HCT116 (cell line): ENCODE measurements at regions of chr10 and their contacts with region 1.

Region 1: GRCh38 chr10:14478604-14479003 is 147.9 kb upstream of the FRMD4A start:
- DNase-seq: peak; percentile 19
- ATAC-seq: peak; percentile 78
- H3K4me3 ChIP-seq: no peak overlapping the region
- H3K27ac ChIP-seq: no peak overlapping the region
- H3K4me1 ChIP-seq: no peaks in the 10 kb centered on the region
- H3K27me3 ChIP-seq: peaks cover 30% of the 10 kb centered on the region
- CTCF ChIP-seq: peak; percentile 48 to 64 (median 56); a peak in 5 of 6 replicates
- POLR2A ChIP-seq: no peak
- RAD21 ChIP-seq: peak; percentile 80

Region 2: DNA sequence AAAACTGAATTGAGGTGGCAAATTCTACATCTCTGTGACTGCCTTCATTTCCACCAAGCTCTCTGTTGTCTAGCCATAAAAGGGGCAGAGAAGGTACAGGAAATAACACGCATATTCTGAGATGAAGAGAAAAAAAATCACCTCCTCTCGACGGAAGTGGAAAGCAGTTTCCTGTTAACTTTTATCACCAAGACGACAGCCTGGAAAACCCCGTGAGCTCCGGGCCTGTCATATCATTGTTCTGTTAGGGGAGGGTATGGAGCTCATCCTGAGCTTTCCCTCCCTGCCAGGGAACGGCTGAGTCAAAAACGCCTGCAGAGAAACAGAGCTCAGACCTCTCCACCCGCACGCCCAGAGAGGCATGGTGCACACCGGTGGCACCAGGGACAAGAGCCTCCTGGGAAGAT is 691.6 kb before region 1 on chr10:
- CTCF ChIA-PET with region 1: interaction called, 3 read pairs
- POLR2A ChIA-PET with region 1: no interaction called
- RAD21 ChIA-PET with region 1: interaction called in 1 of 2 experiments, 3 read pairs
- intact Hi-C with region 1: loop called (anchors 1 kb)
- DNase-seq: no peak
- ATAC-seq: no peak
- H3K4me3 ChIP-seq: no peak overlapping the region
- H3K27ac ChIP-seq: no peak overlapping the region
- H3K4me1 ChIP-seq: no peaks in the 10 kb centered on the region
- H3K27me3 ChIP-seq: no peaks in the 10 kb centered on the region
- CTCF ChIP-seq: no peak
- POLR2A ChIP-seq: no peak
- RAD21 ChIP-seq: no peak

Region 3: GRCh38 chr10:14195433-14195832 is 283.2 kb before region 1 on chr10:
- CTCF ChIA-PET with region 1: interaction called, 48 read pairs
- POLR2A ChIA-PET with region 1: no interaction called
- RAD21 ChIA-PET with region 1: no interaction called
- intact Hi-C with region 1: loop called (anchors 1 kb)
- DNase-seq: no peak
- ATAC-seq: no peak
- H3K4me3 ChIP-seq: no peak overlapping the region
- H3K27ac ChIP-seq: no peak overlapping the region
- H3K4me1 ChIP-seq: no peaks in the 10 kb centered on the region
- H3K27me3 ChIP-seq: peaks cover 67% of the 10 kb centered on the region
- CTCF ChIP-seq: no peak
- POLR2A ChIP-seq: no peak
- RAD21 ChIP-seq: no peak

Region 4: DNA sequence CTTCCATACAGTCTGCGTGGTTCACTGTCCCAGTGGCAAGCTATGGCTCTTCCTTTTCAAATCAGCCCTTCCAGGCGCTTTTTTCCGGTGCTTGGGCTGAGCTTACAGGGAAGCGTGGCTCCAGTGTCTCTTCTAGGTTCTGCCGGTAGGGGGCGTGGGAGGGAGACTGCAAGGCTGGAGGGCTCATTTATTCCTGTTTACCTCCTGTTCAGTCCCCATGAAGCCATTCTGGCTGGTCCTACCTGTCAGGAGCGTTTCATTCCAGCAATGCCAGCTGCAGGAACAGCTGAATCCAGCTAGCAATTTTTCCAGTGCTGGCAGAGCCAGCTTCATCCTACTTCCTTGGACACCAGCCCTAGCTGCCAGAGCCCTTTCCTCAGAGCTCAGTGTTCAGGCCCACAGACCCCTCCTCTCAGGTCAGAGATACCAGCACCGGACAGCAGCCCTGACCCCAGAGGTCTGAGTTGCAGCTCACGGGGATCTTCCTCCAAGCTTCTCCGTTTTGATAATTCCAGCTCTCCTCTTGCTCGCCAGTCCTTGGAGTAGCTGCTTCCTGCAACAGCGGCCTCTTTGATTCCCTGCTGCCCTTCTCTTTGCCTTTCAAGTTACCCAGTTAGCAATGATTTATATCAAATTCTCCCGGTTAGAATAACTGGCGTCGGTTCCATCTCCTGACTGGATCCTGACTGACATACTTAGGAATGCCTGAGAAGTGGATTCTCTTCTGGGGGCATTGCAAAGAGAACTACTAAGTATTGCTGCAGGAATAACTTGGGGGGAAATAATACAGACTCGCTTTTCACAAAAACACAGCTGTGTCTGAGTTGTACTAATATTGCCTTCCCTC is 277.7 kb before region 1 on chr10:
- CTCF ChIA-PET with region 1: interaction called, 48 read pairs
- POLR2A ChIA-PET with region 1: no interaction called
- RAD21 ChIA-PET with region 1: no interaction called
- intact Hi-C with region 1: loop called (anchors 1 kb)
- DNase-seq: no peak
- ATAC-seq: peak; percentile 74
- H3K4me3 ChIP-seq: no peak overlapping the region
- H3K27ac ChIP-seq: no peak overlapping the region
- H3K4me1 ChIP-seq: no peaks in the 10 kb centered on the region
- H3K27me3 ChIP-seq: peaks cover 37% of the 10 kb centered on the region
- CTCF ChIP-seq: peak; percentile 3 to 61 (median 49); a peak in 4 of 6 replicates
- POLR2A ChIP-seq: no peak
- RAD21 ChIP-seq: no peak

Region 5: DNA sequence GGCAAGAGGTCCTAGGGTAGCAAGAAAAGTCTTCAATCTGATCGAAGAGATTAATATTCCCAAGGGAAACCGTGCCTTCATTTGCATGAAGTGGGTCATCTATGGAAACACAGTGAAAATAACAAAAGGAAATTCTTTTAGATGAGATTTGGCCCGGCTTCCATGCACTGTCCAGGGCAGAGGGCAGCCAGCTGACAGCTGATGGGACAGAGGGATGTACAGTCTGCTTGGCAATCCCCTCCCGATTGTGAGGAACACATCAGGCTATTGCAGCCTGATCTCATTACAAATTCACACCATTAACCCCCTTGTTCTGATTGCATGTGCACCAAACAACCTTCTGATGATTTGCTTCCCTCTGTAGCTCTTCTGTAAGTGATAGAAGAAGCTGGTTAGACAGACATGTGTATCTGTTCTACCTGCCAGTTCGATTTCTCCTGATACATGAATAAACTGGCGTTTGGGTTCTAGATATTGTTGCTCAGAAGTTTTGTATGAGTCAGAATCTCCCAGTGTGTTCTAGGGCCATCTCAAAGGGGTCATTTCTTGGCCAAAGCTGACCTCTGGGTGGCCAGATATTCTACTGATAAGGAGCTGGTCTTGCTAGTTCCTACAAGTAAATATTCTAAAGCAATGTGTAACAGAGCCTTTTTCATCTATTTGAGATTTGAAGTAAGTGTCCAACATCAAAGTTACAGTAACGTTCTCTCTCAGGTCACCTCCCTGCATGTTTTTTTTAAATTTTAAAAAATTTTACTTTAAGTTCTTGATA is 253.0 kb before region 1 on chr10:
- CTCF ChIA-PET with region 1: no interaction called
- POLR2A ChIA-PET with region 1: no interaction called
- RAD21 ChIA-PET with region 1: no interaction called
- intact Hi-C with region 1: no loop called
- DNase-seq: no peak
- ATAC-seq: no peak
- H3K4me3 ChIP-seq: no peak overlapping the region
- H3K27ac ChIP-seq: no peak overlapping the region
- H3K4me1 ChIP-seq: no peaks in the 10 kb centered on the region
- H3K27me3 ChIP-seq: peaks cover 70% of the 10 kb centered on the region
- CTCF ChIP-seq: no peak
- POLR2A ChIP-seq: no peak
- RAD21 ChIP-seq: no peak

Region 6: DNA sequence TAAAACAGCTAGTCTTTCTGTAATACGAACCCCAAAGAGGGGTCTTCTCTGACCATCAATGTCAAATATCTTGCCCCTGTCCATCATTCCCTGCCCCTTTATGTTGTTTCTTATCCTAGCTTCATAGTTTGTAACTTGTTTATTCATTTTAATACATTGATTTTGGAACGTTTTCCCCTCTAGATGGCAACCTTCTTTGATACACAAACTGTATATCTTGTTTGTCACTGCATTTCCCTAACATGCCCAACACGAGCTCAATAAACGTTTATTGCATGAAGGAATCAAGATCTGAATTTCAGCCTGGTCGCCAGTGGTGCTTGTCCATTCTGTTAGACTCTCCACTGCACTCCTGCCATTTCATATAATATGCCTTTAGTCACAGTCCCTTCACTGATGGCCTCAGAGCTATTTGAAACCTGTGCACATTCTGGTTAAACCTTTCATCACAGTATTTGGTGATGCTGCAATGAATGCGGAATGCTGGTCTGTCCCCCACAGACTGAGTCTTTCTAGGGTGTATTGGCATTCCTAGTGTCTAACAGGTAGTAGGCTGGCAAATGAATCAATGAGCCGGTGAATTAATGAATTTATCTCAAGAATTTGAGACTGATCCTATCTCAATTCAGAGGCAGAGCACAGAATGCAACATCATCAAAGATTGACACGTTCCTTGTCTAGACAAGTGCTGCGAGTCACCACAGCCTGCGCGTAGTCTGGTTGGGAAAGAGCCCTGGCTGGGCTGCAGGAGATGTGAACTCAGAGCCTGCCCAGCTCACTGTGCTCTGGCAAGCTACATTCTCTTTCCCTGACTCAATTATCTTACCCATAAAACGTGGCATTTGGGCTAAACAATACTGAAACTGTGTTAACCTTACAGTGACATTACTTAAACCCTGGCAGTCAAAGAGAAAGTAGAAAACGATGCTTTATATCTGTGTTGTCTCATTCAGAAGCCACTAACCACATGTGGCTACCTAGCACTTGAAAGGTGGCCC is 92.7 kb before region 1 on chr10:
- CTCF ChIA-PET with region 1: interaction called, 3 read pairs
- POLR2A ChIA-PET with region 1: no interaction called
- RAD21 ChIA-PET with region 1: no interaction called
- intact Hi-C with region 1: loop called (anchors 5 kb)
- DNase-seq: no peak
- ATAC-seq: 0 out of 2 replicates have a peak, but pooled peaks have one; percentile 27
- H3K4me3 ChIP-seq: no peak overlapping the region
- H3K27ac ChIP-seq: no peak overlapping the region
- H3K4me1 ChIP-seq: no peaks in the 10 kb centered on the region
- H3K27me3 ChIP-seq: peaks cover 31% of the 10 kb centered on the region
- CTCF ChIP-seq: peak; percentile 4 to 35 (median 8); a peak in 2 of 6 replicates
- POLR2A ChIP-seq: no peak
- RAD21 ChIP-seq: peak; percentile 14; the same call in 1 of the 2 replicates

Region 7: GRCh38 chr10:14491806-14492205 is 13.2 kb after region 1 on chr10:
- CTCF ChIA-PET with region 1: no interaction called
- POLR2A ChIA-PET with region 1: no interaction called
- RAD21 ChIA-PET with region 1: no interaction called
- intact Hi-C with region 1: no loop called
- DNase-seq: no peak
- ATAC-seq: no peak
- H3K4me3 ChIP-seq: no peak overlapping the region
- H3K27ac ChIP-seq: no peak overlapping the region
- H3K4me1 ChIP-seq: no peaks in the 10 kb centered on the region
- H3K27me3 ChIP-seq: peaks cover 33% of the 10 kb centered on the region
- CTCF ChIP-seq: no peak
- POLR2A ChIP-seq: no peak
- RAD21 ChIP-seq: no peak